Activated naive CD4-positive, alpha-beta T cell treated with anti-CD3 and anti-CD28 coated beads for 36 hours (primary cell): ENCODE measurements at regions of chr13 and their contacts with region 1.

Region 1: GRCh38 chr13:40026174-40026585 is 370.7 kb downstream of the COG6 start:
- DNase-seq: peak; percentile 82
- H3K4me3 Mint-ChIP-seq: no peak overlapping the region
- H3K27ac Mint-ChIP-seq: no peak overlapping the region
- H3K4me1 Mint-ChIP-seq: peaks cover 33% of the 10 kb centered on the region
- H3K27me3 Mint-ChIP-seq: peaks cover 2% of the 10 kb centered on the region

Region 2: GRCh38 chr13:39684531-39685137 is 341.5 kb before region 1 on chr13:
- CTCF ChIA-PET with region 1: no interaction called
- intact Hi-C with region 1: loop called (anchors 10 kb)
- DNase-seq: no peak
- H3K4me3 Mint-ChIP-seq: no peak overlapping the region
- H3K27ac Mint-ChIP-seq: no peak overlapping the region
- H3K4me1 Mint-ChIP-seq: peaks cover 16% of the 10 kb centered on the region
- H3K27me3 Mint-ChIP-seq: no peaks in the 10 kb centered on the region

Region 3: DNA sequence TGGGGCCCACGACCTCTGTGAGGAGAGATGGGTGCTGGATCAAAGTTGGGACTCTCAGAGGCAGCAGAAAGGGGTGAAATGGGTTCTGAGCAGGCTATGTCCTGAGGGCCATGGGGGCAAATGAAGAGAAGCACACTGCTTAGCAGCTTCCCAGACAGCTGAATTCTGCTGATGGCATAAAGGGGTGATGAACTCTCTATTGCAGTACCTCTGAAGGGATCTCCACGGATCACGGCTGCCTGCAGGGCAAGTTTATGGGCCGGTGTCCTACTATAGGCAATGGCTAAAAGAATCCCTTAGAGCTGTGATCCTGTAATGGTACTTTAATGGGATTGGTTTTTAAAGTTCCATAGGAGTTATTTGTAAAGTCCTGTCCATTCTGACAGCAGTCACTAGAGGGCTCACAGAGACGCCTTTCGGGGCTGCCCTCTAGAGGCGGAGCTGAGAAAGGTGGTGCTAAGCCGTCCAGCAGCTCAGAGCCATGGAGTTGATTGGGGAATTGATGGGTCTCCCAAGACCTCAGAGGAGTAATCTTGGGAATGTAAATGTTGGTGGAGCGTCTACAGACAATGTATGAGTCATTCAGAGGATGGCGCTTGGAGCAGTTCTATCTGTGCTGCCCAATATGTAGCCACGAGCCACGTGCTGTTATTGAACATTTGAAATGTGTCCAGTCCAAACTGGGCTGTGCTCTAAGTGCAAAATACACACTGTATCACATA is 83.5 kb before region 1 on chr13:
- CTCF ChIA-PET with region 1: interaction called, 14 read pairs
- intact Hi-C with region 1: no loop called
- DNase-seq: peak; percentile 82
- H3K4me3 Mint-ChIP-seq: no peak overlapping the region
- H3K27ac Mint-ChIP-seq: no peak overlapping the region
- H3K4me1 Mint-ChIP-seq: peaks cover 7% of the 10 kb centered on the region
- H3K27me3 Mint-ChIP-seq: no peaks in the 10 kb centered on the region

Region 4: DNA sequence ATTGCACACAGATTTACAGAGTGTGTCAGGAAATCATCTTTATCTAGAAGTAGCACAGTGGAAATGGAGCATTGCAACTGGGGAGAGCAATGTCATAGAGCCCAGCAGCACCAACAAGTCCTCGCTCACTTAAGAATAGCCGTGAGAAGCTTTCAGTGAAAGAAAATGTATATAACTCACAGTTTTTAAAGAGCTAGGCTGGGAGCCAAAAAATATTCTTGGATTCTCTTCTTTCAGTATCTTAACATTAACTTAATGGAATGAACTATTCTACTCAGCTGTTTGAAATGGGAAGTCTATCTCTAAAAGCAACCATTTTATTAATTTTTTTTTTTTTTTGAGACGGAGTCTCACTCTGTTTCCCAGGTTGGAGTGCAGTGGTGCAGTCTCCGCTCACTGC is 41.1 kb before region 1 on chr13:
- CTCF ChIA-PET with region 1: no interaction called
- intact Hi-C with region 1: no loop called
- DNase-seq: no peak
- H3K4me3 Mint-ChIP-seq: no peak overlapping the region
- H3K27ac Mint-ChIP-seq: no peak overlapping the region
- H3K4me1 Mint-ChIP-seq: no peaks in the 10 kb centered on the region
- H3K27me3 Mint-ChIP-seq: no peaks in the 10 kb centered on the region

Region 5: DNA sequence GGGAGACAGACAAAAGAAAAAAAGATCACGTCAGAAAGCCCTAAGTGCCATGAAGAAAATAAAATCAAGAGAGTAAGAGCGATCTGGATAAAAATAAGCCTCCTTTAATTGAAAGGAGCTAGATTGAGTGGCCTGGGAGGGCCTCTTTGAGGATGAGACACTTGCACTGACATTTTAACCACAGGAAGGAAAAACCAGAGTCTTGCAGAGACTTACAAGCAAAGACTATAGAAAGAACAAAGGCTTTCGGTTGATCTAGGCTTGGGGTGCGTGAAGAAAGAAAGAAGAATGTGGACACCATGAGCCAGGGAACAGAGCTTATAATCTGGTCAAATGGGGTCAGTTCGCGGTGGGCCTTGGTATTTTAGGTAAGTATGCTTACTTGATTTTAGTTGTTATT is 28.0 kb before region 1 on chr13:
- CTCF ChIA-PET with region 1: no interaction called
- intact Hi-C with region 1: loop called (anchors 2 kb)
- DNase-seq: peak; percentile 41
- H3K4me3 Mint-ChIP-seq: no peak overlapping the region
- H3K27ac Mint-ChIP-seq: peak overlapping the region; percentile 25
- H3K4me1 Mint-ChIP-seq: peaks cover 25% of the 10 kb centered on the region
- H3K27me3 Mint-ChIP-seq: no peaks in the 10 kb centered on the region

Region 6: GRCh38 chr13:40077396-40078027 is 51.3 kb after region 1 on chr13:
- CTCF ChIA-PET with region 1: no interaction called
- intact Hi-C with region 1: no loop called
- DNase-seq: no peak
- H3K4me3 Mint-ChIP-seq: no peak overlapping the region
- H3K27ac Mint-ChIP-seq: no peak overlapping the region
- H3K4me1 Mint-ChIP-seq: no peaks in the 10 kb centered on the region
- H3K27me3 Mint-ChIP-seq: no peaks in the 10 kb centered on the region

Region 7: GRCh38 chr13:40517486-40518480 is 491.6 kb after region 1 on chr13:
- CTCF ChIA-PET with region 1: no interaction called
- intact Hi-C with region 1: loop called (anchors 2 kb)
- DNase-seq: peak; percentile 57
- H3K4me3 Mint-ChIP-seq: peak overlapping the region; percentile 23
- H3K27ac Mint-ChIP-seq: peak overlapping the region; percentile 87
- H3K4me1 Mint-ChIP-seq: peaks cover 78% of the 10 kb centered on the region
- H3K27me3 Mint-ChIP-seq: no peaks in the 10 kb centered on the region